Gastrocnemius medialis (tissue), 4 donors: ENCODE measurements at regions of chr12 and their contacts with region 1.

Region 1: DNA sequence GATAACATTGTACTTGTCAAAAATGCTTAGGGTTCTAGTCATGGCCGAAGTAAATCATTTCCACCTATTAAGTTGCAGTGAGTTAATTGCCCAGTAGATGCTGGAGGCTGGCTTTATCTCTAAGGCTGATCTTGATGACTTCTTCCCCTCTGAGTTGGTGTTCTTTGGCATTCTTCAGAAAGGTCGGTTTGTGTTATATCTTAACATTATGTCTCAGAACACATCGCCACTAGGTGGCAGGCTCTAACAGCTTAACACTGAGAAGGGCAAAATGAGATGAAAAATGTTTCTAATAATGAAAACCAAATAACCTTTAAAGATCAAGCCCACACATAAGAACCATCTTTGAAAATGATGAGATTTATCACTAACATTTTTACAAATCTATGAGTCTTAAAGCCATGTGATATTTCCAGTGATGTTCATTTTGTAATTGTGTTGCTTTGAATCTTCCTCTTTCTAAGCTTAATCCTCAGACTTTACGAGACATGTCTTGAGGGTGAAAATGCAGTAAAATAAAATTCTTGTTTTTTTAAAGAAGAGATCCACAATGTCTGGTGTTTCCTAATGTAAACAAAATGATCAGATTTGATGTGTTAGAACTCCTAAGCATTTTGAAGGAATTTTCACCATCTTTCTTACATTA is 28.6 kb downstream of the SUDS3 start:
- DNase-seq: no peak
- ATAC-seq: no peak
- H3K4me3 ChIP-seq: no peak overlapping the region
- H3K27ac ChIP-seq: no peak overlapping the region
- H3K4me1 ChIP-seq: no peaks in the 10 kb centered on the region
- H3K27me3 ChIP-seq: no peaks in the 10 kb centered on the region
- CTCF ChIP-seq: peak; percentile 63 to 70 (median 70)
- POLR2A ChIP-seq: no peak

Region 2: DNA sequence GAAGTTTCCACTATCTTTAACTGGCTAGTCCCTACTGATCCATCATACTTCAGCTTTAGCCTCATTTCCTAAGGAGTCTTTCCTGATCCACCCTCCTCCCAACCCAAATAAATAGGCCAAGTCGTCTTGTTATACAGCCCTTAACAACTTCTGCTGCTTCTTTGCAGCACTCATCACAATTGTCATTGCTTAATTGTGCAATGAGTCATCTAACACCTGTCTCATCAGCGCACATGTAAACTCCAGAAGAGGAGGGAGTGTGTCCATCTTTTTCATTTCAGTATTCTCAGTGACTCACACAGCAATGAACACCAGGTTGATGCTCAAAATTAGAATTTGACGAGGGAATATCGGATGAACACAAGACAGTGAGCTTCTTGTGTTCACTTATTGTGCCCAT is 58.7 kb after region 1 on chr12:
- in situ Hi-C with region 1: no loop called
- intact Hi-C with region 1: no loop called
- DNase-seq: no peak
- ATAC-seq: no peak
- H3K4me3 ChIP-seq: no peak overlapping the region
- H3K27ac ChIP-seq: no peak overlapping the region
- H3K4me1 ChIP-seq: no peaks in the 10 kb centered on the region
- H3K27me3 ChIP-seq: no peaks in the 10 kb centered on the region
- CTCF ChIP-seq: no peak
- POLR2A ChIP-seq: no peak

Region 3: DNA sequence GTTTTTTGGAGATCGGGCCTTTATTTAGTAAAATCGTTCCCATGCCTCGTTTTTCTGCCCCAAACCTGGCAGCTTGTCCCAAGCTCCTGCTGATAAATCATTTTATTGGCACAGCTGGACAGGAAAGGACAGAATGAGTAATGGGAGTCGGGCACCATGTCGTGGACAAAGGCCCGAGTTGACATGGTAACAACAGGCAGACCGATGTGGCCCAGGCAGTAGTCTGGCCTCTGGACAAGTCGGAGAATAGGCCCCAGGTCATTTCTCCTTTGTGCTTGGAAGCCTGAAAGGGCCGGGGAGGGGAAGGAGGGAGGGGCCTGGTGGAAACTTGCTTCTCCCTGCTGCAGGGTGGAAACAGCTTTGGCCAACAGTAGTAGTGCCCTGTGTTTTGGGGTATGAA is 206.3 kb after region 1 on chr12:
- in situ Hi-C with region 1: loop called in 1 of 4 experiments (anchors 10 kb)
- intact Hi-C with region 1: loop called (anchors 5 kb)
- DNase-seq: no peak
- ATAC-seq: no peak
- H3K4me3 ChIP-seq: no peak overlapping the region
- H3K27ac ChIP-seq: no peak overlapping the region
- H3K4me1 ChIP-seq: no peaks in the 10 kb centered on the region
- H3K27me3 ChIP-seq: no peaks in the 10 kb centered on the region
- CTCF ChIP-seq: no peak
- POLR2A ChIP-seq: no peak

Region 4: DNA sequence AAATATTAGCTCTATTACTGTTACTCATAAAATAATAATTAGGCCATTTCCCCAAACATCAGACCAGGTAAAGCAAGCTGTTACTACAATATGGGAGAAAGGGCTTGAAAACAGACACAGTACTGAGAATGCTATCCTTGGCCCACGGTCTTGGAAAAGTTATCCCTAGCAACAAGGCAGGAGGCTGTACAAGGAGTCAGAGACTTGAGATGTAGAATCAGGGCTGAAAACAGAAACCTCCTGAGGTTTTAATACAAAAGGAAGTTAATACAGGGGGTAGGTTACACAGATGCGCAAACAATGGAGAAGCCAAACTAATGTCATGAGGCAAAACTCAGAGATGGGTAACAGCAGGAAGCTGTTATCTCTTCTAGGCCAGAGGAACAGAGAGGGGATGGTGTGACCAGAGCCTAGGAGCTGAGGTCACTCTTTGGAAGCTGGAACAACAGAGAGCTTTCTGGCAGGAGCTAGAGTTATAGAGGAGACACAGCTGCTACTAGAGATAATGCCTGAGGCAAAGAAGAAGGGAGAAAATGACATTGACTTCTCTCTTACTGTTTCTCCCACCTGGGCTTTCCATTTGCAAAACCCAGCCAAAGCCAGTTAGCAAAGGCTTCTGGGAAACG is 220.2 kb after region 1 on chr12:
- in situ Hi-C with region 1: no loop called
- intact Hi-C with region 1: loop called (anchors 5 kb)
- DNase-seq: no peak
- ATAC-seq: no peak
- H3K4me3 ChIP-seq: no peak overlapping the region
- H3K27ac ChIP-seq: no peak overlapping the region
- H3K4me1 ChIP-seq: no peaks in the 10 kb centered on the region
- H3K27me3 ChIP-seq: no peaks in the 10 kb centered on the region
- CTCF ChIP-seq: no peak
- POLR2A ChIP-seq: no peak

Region 5: DNA sequence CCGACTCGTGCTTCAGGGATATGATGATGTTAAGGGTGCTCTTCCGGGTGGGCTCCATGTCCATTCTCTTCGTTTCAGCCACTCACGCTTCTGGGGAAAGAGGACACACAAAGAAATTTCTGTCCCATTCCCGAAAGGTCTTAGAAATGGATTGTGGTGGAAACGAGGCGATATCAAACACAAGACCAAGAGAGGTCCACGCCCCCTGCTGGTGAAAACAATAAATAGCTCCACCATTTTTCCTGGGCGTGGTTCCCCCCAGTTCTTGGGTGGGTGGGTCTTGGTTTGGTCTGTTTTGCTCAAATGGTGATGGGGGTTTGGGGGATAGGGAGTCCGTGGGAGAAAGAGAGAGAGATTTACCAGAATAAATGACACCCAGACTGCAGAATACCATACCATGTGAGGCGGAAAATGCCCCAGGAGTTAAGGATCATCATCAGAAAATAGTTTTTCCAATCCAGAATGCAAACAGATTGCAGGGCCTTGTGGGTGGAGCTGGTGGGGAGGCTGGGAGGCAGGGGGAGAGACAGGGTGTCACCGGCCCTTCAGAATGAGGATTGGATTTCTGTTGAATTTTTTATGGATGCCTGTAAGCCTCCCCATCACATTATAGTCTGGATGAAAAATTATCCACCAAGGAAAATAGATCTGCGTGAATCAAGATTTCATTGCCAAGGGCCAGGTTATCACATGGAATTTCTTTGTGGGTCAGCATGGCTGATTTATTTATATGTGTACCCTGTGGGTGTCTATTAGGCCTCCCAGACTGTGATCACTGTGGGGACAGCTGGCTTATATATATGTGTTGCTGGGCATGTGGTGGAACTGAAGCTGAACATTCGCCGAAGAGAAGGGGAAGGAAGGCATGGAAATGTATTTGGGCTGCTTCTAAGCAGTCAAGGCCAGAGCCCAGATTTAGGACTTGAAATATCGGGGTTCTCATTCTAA is 632.2 kb after region 1 on chr12:
- in situ Hi-C with region 1: loop called in 2 of 4 experiments (anchors 25 kb)
- intact Hi-C with region 1: loop called (anchors 10 kb)
- DNase-seq: no peak
- ATAC-seq: no peak
- H3K4me3 ChIP-seq: no peak overlapping the region
- H3K27ac ChIP-seq: no peak overlapping the region
- H3K4me1 ChIP-seq: no peaks in the 10 kb centered on the region
- H3K27me3 ChIP-seq: peaks cover 0 to 7% (median 0%) of the 10 kb centered on the region in 3 donors
- CTCF ChIP-seq: peak; percentile 7 to 56 (median 39)
- POLR2A ChIP-seq: no peak

Region 6: DNA sequence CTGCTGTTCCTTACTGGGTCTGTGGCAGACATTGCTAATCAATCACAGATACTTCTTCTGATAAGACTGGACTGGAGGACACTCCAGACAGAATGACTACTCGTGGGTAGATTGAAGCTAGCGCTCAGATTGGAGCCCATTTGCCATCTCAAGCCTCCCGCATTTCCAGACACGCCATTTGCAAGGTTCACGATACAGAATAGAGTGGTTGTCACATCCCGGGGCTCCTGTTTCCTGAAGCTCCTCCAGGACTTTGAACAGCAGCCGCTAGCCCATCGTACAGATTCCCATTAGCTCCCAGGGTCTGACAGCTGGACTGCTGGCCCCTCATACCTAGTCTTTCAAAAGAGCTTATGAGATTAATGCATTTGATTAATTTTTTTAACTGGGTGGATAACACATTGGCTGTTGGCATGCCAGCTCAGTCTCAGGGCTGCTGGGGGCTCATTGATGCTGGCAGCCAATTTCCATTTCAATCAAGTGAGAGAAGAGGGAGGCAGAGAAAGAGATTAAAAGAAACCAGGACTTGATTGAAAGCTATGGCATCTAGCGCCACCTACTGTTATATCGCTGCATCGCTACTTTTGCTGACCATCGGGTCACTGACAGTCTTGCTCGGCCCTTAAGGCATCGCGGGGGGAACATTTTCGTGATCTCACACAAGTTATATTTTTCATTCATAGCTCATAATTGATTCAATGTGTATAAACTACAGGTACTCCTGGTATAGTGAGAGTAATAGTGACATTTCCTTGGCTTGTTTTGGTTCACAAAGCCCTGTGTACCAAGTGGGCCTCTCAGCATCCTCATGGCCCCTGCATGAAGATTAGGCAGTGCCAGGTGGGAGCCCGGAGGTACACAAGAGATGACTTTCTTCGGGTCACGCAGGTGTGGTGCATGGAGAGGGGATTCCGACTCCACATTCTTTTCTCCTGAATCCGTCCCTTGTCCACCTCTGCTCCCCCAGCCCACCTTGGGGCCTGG is 1008.1 kb after region 1 on chr12:
- in situ Hi-C with region 1: loop called in 2 of 4 experiments (anchors 25 kb)
- intact Hi-C with region 1: no loop called
- DNase-seq: peak; percentile 23 to 53
- ATAC-seq: peak in 1 of 2 donors; percentile 84
- H3K4me3 ChIP-seq: no peak overlapping the region
- H3K27ac ChIP-seq: no peak overlapping the region
- H3K4me1 ChIP-seq: no peaks in the 10 kb centered on the region
- H3K27me3 ChIP-seq: no peaks in the 10 kb centered on the region
- CTCF ChIP-seq: peak; percentile 72 to 89 (median 81)
- POLR2A ChIP-seq: no peak

Region 7: GRCh38 chr12:119544765-119545625 is 1140.0 kb after region 1 on chr12:
- in situ Hi-C with region 1: no loop called
- intact Hi-C with region 1: loop called (anchors 2 kb)
- DNase-seq: peak; percentile 38 to 47
- ATAC-seq: peak; percentile 54 to 81
- H3K4me3 ChIP-seq: no peak overlapping the region
- H3K27ac ChIP-seq: no peak overlapping the region
- H3K4me1 ChIP-seq: no peaks in the 10 kb centered on the region
- H3K27me3 ChIP-seq: no peaks in the 10 kb centered on the region
- CTCF ChIP-seq: peak; percentile 69 to 87 (median 81)
- POLR2A ChIP-seq: no peak